ENCODE measurements at regions of chr7 and their contacts with region 1.

Region 1: DNA sequence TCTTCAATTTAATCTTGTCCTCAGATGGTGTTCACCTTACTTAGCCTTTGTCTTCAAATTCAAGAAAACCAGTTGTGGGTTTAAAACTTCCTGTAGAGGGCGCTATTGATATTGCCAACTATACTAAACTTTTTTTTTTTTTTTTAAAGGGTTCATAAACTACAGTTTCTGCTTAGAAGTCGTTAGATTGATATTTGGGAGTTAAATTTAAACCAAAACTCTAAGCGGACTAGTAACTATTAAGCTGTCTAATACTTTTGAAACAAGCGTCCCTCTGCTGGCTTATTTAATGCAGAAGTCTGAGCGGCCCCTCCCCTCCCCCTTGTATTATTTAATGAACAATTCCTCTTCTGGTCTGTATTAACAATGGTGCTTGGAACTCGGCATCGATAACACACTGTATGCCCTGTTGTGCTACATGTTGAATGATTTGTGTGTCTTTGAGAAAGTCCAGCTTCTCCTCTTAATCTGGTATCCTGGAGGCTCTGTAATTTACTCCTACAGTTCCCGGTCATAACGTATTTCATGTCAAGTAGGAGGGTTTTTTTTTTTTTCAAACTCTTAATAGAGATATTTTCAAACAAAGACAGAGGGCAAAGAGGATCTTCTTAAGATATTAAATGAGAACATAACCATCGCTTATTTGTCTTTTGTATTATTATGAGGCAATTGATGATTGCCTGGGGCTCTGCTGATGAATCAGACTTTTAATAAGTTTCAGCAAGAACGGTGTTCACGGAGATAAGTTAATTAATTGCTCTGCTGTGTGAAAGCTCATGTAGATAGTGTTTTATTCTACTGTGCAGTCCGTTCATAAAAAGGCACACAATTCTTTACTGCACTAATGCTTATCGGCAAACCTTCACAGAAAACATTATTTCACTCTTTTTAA is 22.6 kb upstream of the CREB5 start:
- DNase-seq: peak; percentile 44
- H3K4me3 ChIP-seq: peak overlapping the region; percentile 32 to 45
- H3K27ac ChIP-seq: no peak overlapping the region
- H3K4me1 ChIP-seq: peaks cover 0 to 6% of the 10 kb centered on the region in 2 experiments; a peak in 1 of 4 replicates
- H3K27me3 ChIP-seq: no peaks in the 10 kb centered on the region; the same call in 1 of the 2 replicates
- CTCF ChIP-seq: peak; percentile 99
- EP300 ChIP-seq: no peak
- RAD21 ChIP-seq: peak; percentile 85

Region 2: GRCh38 chr7:28258240-28258639 is 131.5 kb before region 1 on chr7:
- CTCF ChIA-PET with region 1: no interaction called
- POLR2A ChIA-PET with region 1: no interaction called
- DNase-seq: no peak
- H3K4me3 ChIP-seq: no peak overlapping the region
- H3K27ac ChIP-seq: no peak overlapping the region
- H3K4me1 ChIP-seq: no peaks in the 10 kb centered on the region
- H3K27me3 ChIP-seq: peaks cover 19% of the 10 kb centered on the region; the same call in 1 of the 2 replicates
- CTCF ChIP-seq: no peak
- EP300 ChIP-seq: no peak
- RAD21 ChIP-seq: no peak

Region 3: DNA sequence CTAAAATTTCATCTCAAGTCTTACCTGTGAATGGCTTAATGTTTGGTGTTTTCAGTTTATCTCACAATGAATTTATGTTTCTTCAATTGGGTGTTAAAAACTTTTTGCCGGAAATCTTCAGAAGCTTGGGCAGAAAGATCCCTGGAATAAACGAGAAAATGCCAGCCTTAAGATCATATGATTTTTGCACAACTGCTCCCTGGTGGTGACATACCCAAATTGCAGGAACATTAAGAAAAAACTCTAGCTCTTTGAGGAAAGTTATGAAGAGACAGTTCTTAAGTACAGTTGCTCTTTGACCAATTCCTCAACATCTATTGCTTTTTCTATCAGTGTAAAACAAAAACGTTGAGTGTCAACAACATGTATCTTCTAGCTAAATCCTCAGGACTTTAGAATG is 25.7 kb before region 1 on chr7:
- CTCF ChIA-PET with region 1: interaction called, 14 read pairs
- POLR2A ChIA-PET with region 1: no interaction called
- DNase-seq: no peak
- H3K4me3 ChIP-seq: no peak overlapping the region
- H3K27ac ChIP-seq: no peak overlapping the region
- H3K4me1 ChIP-seq: no peaks in the 10 kb centered on the region
- H3K27me3 ChIP-seq: no peaks in the 10 kb centered on the region
- CTCF ChIP-seq: peak; percentile 45
- EP300 ChIP-seq: no peak
- RAD21 ChIP-seq: no peak

Region 4: GRCh38 chr7:28378574-28379149 is 11.1 kb before region 1 on chr7:
- CTCF ChIA-PET with region 1: interaction called, 38 read pairs
- POLR2A ChIA-PET with region 1: no interaction called
- DNase-seq: no peak
- H3K4me3 ChIP-seq: no peak overlapping the region
- H3K27ac ChIP-seq: no peak overlapping the region
- H3K4me1 ChIP-seq: no peaks in the 10 kb centered on the region
- H3K27me3 ChIP-seq: peaks cover 12% of the 10 kb centered on the region; the same call in 1 of the 2 replicates
- CTCF ChIP-seq: no peak
- EP300 ChIP-seq: no peak
- RAD21 ChIP-seq: no peak

Region 5: GRCh38 chr7:28400838-28401360 is 11.1 kb after region 1 on chr7:
- CTCF ChIA-PET with region 1: interaction called, 11 read pairs
- POLR2A ChIA-PET with region 1: no interaction called
- DNase-seq: no peak
- H3K4me3 ChIP-seq: no peak overlapping the region
- H3K27ac ChIP-seq: no peak overlapping the region
- H3K4me1 ChIP-seq: no peaks in the 10 kb centered on the region; a peak in 1 of 4 replicates
- H3K27me3 ChIP-seq: peaks cover 1% of the 10 kb centered on the region; the same call in 1 of the 2 replicates
- CTCF ChIP-seq: no peak
- EP300 ChIP-seq: no peak
- RAD21 ChIP-seq: no peak

Region 6: GRCh38 chr7:28414453-28414852 is 24.7 kb after region 1 on chr7:
- CTCF ChIA-PET with region 1: interaction called, 13 read pairs
- POLR2A ChIA-PET with region 1: no interaction called
- DNase-seq: no peak
- H3K4me3 ChIP-seq: no peak overlapping the region
- H3K27ac ChIP-seq: no peak overlapping the region
- H3K4me1 ChIP-seq: peaks cover 3 to 18% of the 10 kb centered on the region in 2 experiments; a peak in 2 of 4 replicates
- H3K27me3 ChIP-seq: no peaks in the 10 kb centered on the region; the same call in 1 of the 2 replicates
- CTCF ChIP-seq: no peak
- EP300 ChIP-seq: no peak
- RAD21 ChIP-seq: no peak

Region 7: DNA sequence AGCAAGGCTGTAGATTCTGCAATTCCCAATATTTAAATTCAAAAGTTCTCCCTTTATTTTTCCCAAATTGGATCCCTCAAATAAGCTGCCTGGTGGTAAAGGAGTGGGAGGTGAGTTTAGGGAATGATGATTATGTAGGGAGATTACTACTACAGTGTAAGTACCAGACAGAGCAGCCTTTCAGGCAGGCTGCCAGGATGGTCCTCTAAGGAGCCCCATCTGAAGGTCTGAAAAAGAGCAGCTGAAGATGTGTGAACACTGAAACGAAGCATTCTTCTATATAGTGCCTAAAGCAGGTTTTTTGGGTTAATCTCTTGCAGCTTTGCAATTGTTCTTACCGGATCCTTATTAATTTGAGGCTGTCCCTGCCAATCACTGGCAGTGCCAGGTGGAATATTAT is 107.3 kb after region 1 on chr7:
- CTCF ChIA-PET with region 1: no interaction called
- POLR2A ChIA-PET with region 1: no interaction called
- DNase-seq: no peak
- H3K4me3 ChIP-seq: no peak overlapping the region
- H3K27ac ChIP-seq: no peak overlapping the region
- H3K4me1 ChIP-seq: no peaks in the 10 kb centered on the region
- H3K27me3 ChIP-seq: no peaks in the 10 kb centered on the region
- CTCF ChIP-seq: no peak
- EP300 ChIP-seq: no peak
- RAD21 ChIP-seq: no peak

Region 8: DNA sequence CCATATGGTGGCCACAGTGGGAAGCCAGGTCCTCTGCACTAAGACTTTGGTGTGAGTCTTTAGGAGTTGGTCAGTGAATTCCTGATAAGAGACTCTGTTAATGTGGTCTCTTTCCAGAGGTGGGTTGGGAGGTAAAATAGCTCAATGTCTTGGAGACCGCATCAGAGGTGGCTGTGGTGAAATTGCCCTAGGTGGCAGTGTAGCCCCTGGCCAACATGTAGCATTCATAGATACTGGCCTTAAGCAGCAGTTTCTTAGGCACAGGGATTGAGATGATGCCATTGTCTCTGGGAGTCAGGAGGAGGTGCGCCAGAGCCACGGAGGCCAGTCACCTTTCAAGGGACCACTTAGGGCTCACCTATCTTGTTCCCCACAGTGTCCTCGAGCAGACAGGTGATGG is 225.3 kb after region 1 on chr7:
- CTCF ChIA-PET with region 1: interaction called, 26 read pairs
- POLR2A ChIA-PET with region 1: no interaction called
- DNase-seq: no peak
- H3K4me3 ChIP-seq: no peak overlapping the region
- H3K27ac ChIP-seq: no peak overlapping the region
- H3K4me1 ChIP-seq: peaks cover 0 to 14% of the 10 kb centered on the region in 2 experiments; a peak in 2 of 4 replicates
- H3K27me3 ChIP-seq: no peaks in the 10 kb centered on the region
- CTCF ChIP-seq: peak; percentile 47
- EP300 ChIP-seq: no peak
- RAD21 ChIP-seq: peak; percentile 46

Region 9: DNA sequence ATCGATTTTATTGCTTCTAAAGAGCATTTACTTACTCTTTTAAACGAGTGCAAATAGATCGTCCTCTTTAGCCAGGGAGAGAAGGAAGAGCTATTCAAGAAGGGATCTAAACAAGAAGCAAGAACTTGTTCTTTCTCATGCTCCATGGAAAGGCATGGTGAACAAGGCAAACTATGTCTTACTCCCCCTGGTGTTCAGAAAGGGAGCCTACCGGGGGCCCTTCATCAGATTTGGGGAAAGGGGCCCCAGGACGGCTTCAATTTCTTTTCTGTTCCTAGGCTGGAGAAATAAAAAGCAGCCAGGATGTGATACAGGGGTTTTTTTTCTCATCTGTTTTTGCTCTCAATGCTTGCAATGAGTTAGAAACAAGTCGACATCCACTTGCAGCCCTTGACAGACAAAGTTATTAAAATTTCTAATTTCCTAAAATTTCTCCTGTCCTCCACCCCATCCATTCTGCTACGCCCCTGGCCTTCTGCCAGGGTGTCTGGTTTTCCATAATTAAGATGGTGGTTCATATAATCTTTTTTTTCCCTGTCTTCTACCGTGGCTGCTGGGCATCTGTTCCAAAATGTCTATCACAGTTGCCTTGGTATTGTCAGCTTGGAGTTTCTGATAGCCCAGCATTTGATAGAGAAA is 237.0 kb after region 1 on chr7:
- CTCF ChIA-PET with region 1: interaction called, 24 read pairs
- POLR2A ChIA-PET with region 1: no interaction called
- DNase-seq: peak; percentile 60
- H3K4me3 ChIP-seq: no peak overlapping the region
- H3K27ac ChIP-seq: no peak overlapping the region
- H3K4me1 ChIP-seq: peaks cover 3 to 8% of the 10 kb centered on the region in 2 experiments; a peak in 2 of 4 replicates
- H3K27me3 ChIP-seq: no peaks in the 10 kb centered on the region
- CTCF ChIP-seq: peak; percentile 86
- EP300 ChIP-seq: no peak
- RAD21 ChIP-seq: peak; percentile 76